K562 (cell line): ENCODE measurements at regions of chr2 and their contacts with region 1.

Region 1: DNA sequence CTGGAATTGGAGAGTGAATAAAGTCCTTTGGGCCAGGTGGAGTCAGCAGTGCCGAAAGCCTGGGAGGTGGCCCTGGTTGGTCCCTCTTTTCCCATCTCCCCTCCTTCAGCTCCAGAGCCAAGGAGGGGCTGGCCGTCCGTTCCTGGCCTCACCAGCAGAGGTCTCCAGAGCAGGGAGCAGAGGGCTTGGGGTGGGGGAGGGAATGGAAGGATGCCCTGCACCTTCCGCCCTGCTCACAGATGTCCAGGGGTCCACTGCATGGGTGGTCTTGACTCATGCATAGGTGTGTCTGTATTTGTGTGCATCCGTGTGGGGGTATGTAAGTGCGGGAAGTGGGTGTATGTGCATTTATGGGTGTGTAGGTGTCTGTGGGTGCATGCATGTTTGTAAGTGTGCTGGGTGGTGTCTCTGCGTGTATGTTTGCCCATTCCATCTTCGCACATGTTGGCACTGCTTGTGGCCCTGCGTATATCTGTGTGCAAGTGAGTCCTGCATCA is 201.8 kb downstream of the ZFP36L2 start:
- DNase-seq: peak; percentile 79 to 87 (median 84)
- ATAC-seq: peak; percentile 96
- H3K4me3 ChIP-seq: no peak overlapping the region
- H3K27ac ChIP-seq: no peak overlapping the region
- H3K4me1 ChIP-seq: peaks cover 0 to 13% of the 10 kb centered on the region in 2 experiments; a peak in 3 of 5 replicates
- H3K27me3 ChIP-seq: no peaks in the 10 kb centered on the region
- CTCF ChIP-seq: peak; percentile 90 to 92 (median 90)
- EP300 ChIP-seq: no peak
- POLR2A ChIP-seq: no peak
- RAD21 ChIP-seq: peak; percentile 92 to 98

Region 2: GRCh38 chr2:42639340-42640077 is 385.1 kb before region 1 on chr2:
- CTCF ChIA-PET with region 1: no interaction called
- POLR2A ChIA-PET with region 1: no interaction called
- in situ Hi-C with region 1: no loop called
- intact Hi-C with region 1: no loop called
- DNase-seq: no peak
- ATAC-seq: no peak
- H3K4me3 ChIP-seq: no peak overlapping the region
- H3K27ac ChIP-seq: no peak overlapping the region
- H3K4me1 ChIP-seq: no peaks in the 10 kb centered on the region
- H3K27me3 ChIP-seq: no peaks in the 10 kb centered on the region
- CTCF ChIP-seq: no peak
- EP300 ChIP-seq: no peak
- POLR2A ChIP-seq: no peak
- RAD21 ChIP-seq: no peak

Region 3: DNA sequence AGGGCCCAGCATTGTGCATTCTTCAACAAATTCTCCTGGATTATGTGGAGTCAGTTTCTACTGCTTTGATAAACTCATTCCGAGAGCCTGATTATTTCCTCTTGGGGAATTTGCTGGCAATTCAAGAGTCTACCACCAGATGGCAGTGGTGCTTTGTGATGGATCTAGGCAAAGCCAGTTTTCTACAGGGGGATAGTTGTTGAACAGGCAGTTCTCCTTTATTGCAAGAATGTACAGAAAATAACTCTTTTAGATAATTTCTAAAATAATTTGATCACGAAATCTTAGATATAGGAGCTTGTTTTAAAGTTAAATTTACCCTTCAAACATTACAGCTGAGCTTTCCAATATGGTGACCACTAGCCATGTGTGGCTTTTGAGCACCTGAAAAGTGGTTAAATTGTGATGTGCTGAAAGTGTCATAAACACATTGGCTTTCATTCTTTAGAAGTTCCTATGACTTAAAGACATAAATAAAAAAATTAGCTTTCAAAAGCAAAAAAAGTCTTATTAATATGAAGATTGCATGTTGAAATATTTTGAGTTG is 165.5 kb before region 1 on chr2:
- CTCF ChIA-PET with region 1: interaction called, 5 read pairs
- POLR2A ChIA-PET with region 1: no interaction called
- in situ Hi-C with region 1: no loop called
- intact Hi-C with region 1: loop called (anchors 1 kb)
- DNase-seq: peak; percentile 78 to 85 (median 81)
- ATAC-seq: peak; percentile 72
- H3K4me3 ChIP-seq: no peak overlapping the region
- H3K27ac ChIP-seq: no peak overlapping the region
- H3K4me1 ChIP-seq: peaks cover 0 to 15% of the 10 kb centered on the region in 2 experiments; a peak in 3 of 5 replicates
- H3K27me3 ChIP-seq: no peaks in the 10 kb centered on the region
- CTCF ChIP-seq: peak; percentile 85 to 97 (median 86)
- EP300 ChIP-seq: no peak
- POLR2A ChIP-seq: no peak
- RAD21 ChIP-seq: peak; percentile 98 to 99

Region 4: DNA sequence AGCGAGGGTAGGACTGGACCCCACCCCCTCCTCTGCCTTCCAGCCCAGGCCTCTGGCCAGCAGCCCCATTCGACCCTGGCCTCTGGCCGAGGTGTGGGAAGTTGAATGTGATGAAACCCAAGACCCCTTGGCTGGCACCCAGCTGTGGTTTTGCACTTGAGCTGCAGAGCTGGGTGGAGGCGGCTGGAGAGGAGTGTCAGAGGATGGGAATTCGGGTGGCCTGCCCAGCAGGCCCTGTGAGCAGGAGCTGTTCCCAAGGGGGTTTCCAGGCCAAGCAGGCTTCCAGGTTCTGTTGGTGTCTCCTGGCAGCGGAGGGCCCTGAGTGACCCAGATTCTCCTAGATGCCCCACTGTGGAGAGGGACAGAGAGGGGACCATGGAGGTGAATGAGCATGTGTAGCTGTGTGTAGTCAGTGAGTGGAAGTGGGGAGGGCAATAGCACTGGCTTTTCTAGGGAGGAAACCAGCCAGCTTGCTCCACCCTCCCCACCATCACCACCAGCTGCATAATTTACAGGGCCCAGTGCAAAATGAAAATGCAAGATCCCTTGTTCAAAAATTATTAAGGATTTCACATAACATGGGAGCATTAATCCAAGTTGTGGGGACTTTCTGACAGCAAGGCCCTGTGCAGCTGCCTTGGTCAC is 60.0 kb before region 1 on chr2:
- CTCF ChIA-PET with region 1: no interaction called
- POLR2A ChIA-PET with region 1: no interaction called
- in situ Hi-C with region 1: no loop called
- intact Hi-C with region 1: loop called (anchors 2 kb)
- DNase-seq: no peak
- ATAC-seq: no peak
- H3K4me3 ChIP-seq: no peak overlapping the region
- H3K27ac ChIP-seq: no peak overlapping the region
- H3K4me1 ChIP-seq: peaks cover 22 to 30% of the 10 kb centered on the region in 2 experiments
- H3K27me3 ChIP-seq: no peaks in the 10 kb centered on the region
- CTCF ChIP-seq: no peak
- EP300 ChIP-seq: no peak
- POLR2A ChIP-seq: no peak
- RAD21 ChIP-seq: no peak

Region 5: DNA sequence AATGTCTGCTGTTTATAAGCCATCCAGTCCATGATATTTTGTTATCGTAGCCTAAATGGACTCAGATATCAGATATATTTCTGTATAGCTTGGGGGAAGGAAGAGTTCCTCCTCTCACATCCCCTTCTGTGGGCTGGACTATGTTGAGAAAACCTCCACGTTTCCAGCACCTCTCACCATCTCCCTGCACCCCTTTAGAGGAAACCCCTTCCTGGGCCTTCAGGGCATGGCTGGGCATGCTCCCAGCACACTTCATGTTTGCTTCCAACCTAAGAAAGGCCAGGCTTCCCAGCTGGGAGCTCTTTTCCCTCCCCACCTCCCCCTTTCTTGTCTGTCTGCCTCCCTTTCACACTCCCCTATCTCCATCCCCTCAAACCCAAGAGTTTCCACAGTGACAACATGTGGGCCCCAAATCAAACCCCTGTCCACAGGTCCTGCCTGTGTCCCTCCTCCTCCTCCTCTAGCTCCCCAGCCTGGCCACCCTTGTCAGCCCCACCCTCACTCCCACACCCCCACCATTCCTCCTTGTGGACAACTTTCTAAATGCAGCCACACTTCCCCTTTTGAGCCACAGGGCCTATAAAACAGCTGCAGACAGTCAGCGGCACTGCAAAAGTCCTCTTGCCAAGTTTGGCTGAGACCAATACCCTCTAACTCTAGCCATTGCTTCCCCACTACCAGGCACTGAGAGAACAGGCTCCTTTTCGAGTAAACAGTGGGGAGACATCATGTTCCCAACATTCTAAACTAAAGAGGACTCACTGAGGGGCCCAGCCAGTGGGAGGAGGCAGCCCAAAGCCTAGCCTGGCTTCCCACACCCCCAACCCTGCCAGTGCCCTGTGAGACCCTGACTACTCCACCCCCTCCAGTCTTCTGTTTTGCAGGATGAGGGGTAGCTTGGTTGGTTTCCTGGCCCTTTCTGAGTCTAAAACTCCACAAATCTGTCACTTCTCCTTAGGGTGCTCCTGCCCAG is 81.3 kb after region 1 on chr2:
- CTCF ChIA-PET with region 1: interaction called, 3 read pairs
- POLR2A ChIA-PET with region 1: no interaction called
- in situ Hi-C with region 1: no loop called
- intact Hi-C with region 1: loop called (anchors 5 kb)
- DNase-seq: peak; percentile 77 to 81 (median 80)
- ATAC-seq: peak; percentile 98
- H3K4me3 ChIP-seq: no peak overlapping the region
- H3K27ac ChIP-seq: no peak overlapping the region
- H3K4me1 ChIP-seq: peaks cover 12 to 16% of the 10 kb centered on the region in 2 experiments
- H3K27me3 ChIP-seq: no peaks in the 10 kb centered on the region
- CTCF ChIP-seq: peak; percentile 61 to 82 (median 71)
- EP300 ChIP-seq: no peak
- POLR2A ChIP-seq: no peak
- RAD21 ChIP-seq: peak; percentile 60 to 67

Region 6: DNA sequence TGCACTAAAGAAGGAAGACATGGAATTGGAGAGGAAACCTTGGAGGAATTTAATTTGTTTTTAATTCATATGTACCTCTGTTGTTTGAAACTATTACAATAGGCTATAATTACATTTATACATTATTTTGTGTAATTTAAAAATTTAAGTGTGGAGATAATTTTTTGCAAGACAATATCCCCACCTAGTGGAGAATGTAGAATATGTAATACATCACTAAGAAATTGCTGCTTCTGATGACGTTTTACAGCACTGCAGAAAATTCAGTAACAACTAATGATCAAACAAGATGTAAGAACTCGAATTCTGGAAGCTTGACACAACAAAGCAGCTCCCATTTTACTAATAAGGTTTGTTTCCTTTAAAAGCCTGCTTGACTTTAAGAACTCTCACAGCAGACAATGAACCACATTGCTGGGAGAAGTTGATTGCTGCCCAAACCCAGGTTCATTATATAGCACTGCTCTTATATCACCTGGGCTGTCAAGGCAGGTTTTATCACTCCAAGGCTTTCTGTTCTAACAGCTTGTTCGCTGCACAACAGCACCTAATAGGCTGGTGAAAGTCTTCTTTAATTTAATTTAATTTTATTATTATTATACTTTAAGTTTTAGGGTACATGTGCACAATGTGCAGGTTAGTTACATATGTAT is 517.8 kb after region 1 on chr2:
- CTCF ChIA-PET with region 1: interaction called, 4 read pairs
- POLR2A ChIA-PET with region 1: interaction called, 3 read pairs
- in situ Hi-C with region 1: no loop called
- intact Hi-C with region 1: loop called (anchors 10 kb)
- DNase-seq: peak; percentile 20 to 38 (median 32)
- ATAC-seq: peak; percentile 70
- H3K4me3 ChIP-seq: no peak overlapping the region
- H3K27ac ChIP-seq: no peak overlapping the region
- H3K4me1 ChIP-seq: peaks cover 0 to 4% of the 10 kb centered on the region in 2 experiments; a peak in 1 of 5 replicates
- H3K27me3 ChIP-seq: no peaks in the 10 kb centered on the region
- CTCF ChIP-seq: peak in 2 of 3 experiments; percentile 36 to 72; a peak in 4 of 6 replicates
- EP300 ChIP-seq: no peak
- POLR2A ChIP-seq: no peak
- RAD21 ChIP-seq: peak; percentile 61 to 74

Region 7: GRCh38 chr2:43714164-43714563 is 689.6 kb after region 1 on chr2:
- CTCF ChIA-PET with region 1: no interaction called
- POLR2A ChIA-PET with region 1: no interaction called
- in situ Hi-C with region 1: no loop called
- intact Hi-C with region 1: no loop called
- DNase-seq: no peak
- ATAC-seq: no peak
- H3K4me3 ChIP-seq: no peak overlapping the region
- H3K27ac ChIP-seq: no peak overlapping the region
- H3K4me1 ChIP-seq: peaks cover 2 to 8% of the 10 kb centered on the region in 2 experiments; a peak in 3 of 5 replicates
- H3K27me3 ChIP-seq: no peaks in the 10 kb centered on the region
- CTCF ChIP-seq: no peak
- EP300 ChIP-seq: no peak
- POLR2A ChIP-seq: no peak
- RAD21 ChIP-seq: no peak